Dendritic cell treated with granulocyte-macrophage colony-stimulating factor and Interleukin-4, amounts not matched to agents 40 ng/mL and 50 ng/mL, for 4 days (primary cell): ENCODE measurements at regions of chr3 and their contacts with region 1.

Region 1: DNA sequence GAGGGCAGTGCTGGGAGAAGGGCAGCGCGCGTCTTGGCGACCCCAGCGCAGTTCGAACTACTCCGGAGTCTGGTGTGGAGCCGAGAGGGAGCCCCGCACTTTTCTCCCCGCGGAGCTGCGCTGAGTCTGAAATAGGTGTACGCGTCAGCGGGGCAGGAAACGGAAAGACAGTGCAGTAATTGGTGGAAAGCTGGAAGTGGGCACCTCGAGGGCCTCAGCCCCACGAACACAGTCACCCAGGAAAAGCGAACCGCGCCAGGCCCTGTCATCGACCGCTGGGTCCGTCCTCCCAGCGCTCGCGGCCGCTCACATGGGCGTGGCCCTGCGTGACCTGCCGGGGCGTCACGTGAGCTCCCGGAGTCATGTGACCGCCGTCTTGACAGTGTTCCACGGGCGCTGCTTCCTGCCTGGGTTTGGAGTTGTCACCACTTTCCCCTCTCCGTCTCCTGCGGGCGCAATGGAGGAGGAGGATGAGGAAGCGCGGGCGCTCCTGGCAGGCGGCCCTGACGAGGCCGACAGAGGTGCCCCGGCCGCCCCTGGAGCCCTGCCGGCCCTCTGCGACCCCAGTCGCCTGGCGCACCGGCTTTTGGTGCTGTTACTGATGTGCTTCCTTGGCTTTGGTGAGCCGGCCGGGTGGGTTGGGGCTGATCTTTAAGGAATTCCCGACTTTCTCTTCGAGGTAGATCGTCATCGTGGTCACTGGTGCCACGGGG is at the start of gene MFSD1:
- H3K4me3 Mint-ChIP-seq: peak within 1 kb of the TSS; percentile 85
- H3K27ac Mint-ChIP-seq: peak within 1 kb of the TSS; percentile 96
- H3K4me1 Mint-ChIP-seq: peaks cover 29% of the 10 kb centered on the region
- H3K27me3 Mint-ChIP-seq: peaks cover 1% of the 10 kb centered on the region

Region 2: DNA sequence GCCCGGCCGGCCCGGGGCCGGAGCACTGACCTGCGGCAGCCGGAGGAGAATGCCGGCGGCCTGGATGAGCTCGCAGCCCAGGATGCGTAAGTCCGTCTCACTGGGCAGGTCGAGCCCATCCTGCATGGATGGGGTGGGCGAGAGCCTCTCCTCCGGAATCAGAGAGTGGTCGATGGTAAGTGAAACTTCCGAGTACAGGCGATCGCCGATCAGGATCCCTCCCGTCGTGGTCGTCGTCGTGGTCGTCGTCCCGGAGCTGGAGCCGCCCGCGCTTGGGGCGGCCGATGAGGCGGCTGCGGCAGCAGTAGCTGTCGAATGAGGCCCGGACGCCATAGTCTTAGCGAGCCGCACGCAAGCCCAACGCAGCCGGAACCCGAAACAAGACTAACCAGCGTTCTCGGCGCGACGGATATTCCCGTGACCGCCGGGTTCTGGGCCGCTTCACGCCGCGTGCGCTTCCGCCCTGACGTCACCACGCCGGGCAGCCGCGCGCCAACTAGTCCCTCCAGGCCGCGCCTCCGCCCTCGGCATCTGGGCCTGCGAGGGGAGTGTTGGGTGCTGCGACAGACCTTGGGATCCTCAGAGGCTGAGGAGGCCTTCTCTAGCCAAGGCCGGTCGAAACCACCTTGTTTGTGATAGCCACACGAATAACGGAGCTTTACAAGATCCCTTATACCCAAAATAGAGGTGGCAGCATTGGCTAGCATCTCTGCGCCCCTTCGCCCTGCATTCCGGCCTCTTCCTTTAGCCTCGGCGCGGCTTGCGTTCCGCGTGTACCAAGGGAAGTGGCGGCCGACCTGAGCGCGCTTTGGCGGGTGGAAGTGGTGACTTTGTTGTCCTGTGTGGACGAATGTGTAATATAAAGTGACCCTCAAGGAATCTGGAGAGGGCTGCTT is 1641.8 kb before region 1 on chr3 and contains the start of gene CCNL1:
- intact Hi-C with region 1: loop called (anchors 10 kb)
- H3K4me3 Mint-ChIP-seq: peak within 1 kb of the TSS; percentile 99
- H3K27ac Mint-ChIP-seq: peak within 1 kb of the TSS; percentile 98
- H3K4me1 Mint-ChIP-seq: peaks cover 47% of the 10 kb centered on the region
- H3K27me3 Mint-ChIP-seq: no peaks in the 10 kb centered on the region